ENCODE measurements at regions of chr1 and their contacts with region 1.

Region 1: DNA sequence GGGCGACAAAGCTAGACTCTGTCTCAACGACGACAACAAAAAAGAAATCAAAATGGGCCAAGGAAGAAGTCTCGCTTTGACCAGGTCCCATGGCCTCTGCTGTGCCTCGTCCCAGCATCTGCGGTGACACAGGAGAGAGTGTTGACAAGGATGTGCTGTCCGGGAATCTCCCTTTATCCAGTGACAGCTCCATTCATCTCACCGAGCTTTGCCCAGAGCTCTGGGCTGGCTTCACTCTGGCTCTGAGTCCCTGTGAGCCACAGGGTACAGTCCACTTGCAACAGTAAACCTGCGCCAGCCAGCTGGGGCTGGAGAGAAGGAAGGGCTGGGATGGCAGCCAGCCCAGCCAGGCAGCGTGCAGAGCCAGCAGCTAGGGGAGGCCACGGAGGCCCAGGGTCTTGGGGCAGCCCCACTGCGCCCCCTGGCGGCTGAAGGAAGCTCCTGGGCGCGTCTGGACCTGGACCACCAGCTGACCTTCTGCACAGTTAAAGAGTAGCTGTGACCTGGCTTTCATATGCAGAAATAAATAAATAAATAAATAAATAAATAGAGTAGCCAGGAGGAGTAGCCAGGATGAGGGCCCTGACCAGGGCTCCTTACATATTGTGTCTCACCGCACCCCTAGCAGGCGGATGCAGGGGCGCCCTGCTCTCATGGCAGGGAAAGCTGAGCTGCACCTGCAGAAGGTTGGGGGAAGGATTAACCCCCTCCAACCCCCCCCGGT is 29.7 kb downstream of the ENO1 start:
- DNase-seq: peak; percentile 97 to 98
- H3K4me3 ChIP-seq: no peak overlapping the region
- H3K27ac ChIP-seq: peak overlapping the region; percentile 52 to 59 (median 56)
- H3K4me1 ChIP-seq: peaks cover 22 to 30% of the 10 kb centered on the region in 2 donors
- H3K27me3 ChIP-seq: no peaks in the 10 kb centered on the region
- CTCF ChIP-seq: peak; percentile 80 to 97 (median 94)
- POLR2A ChIP-seq: peak in 1 of 2 donors; percentile 64

Region 2: DNA sequence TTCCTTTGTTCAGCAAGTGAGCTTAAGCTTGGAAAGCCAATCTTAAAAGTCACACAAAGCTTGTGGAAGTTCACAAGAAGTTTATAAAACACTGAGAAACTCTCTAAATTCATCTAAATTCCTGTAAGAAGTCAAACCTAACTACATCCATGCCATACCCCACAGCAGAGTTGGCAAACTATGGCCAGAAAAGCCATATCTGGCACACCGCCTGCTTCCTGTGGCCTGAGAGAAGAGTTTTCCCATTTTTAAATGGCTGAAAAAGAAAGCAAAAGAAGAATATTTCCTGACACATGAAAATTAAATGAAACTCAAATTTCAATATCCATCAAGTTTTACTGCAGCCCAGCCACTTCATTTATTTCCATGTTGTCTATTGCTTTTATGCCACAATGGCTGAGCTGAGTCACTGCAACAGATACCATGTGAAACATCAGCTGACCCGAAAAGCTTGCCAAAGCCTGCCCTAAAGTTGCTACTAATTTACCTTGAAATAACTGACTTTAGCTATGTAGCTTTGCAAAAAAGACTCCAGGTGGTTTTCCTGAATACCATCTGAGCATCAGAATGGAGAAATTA is 293.8 kb before region 1 on chr1:
- intact Hi-C with region 1: loop called (anchors 10 kb)
- DNase-seq: peak; percentile 48 to 67
- H3K4me3 ChIP-seq: no peak overlapping the region
- H3K27ac ChIP-seq: peak overlapping the region; percentile 21 to 72 (median 46)
- H3K4me1 ChIP-seq: peaks cover 26 to 30% of the 10 kb centered on the region in 2 donors
- H3K27me3 ChIP-seq: no peaks in the 10 kb centered on the region
- CTCF ChIP-seq: no peak
- POLR2A ChIP-seq: no peak

Region 3: GRCh38 chr1:8794569-8794968 is 54.3 kb before region 1 on chr1:
- intact Hi-C with region 1: no loop called
- DNase-seq: peak; percentile 27 to 34
- H3K4me3 ChIP-seq: no peak overlapping the region
- H3K27ac ChIP-seq: no peak overlapping the region
- H3K4me1 ChIP-seq: peaks cover 22% of the 10 kb centered on the region in 2 donors
- H3K27me3 ChIP-seq: no peaks in the 10 kb centered on the region
- CTCF ChIP-seq: peak in 1 of 6 experiments; percentile 11
- POLR2A ChIP-seq: no peak

Region 4: GRCh38 chr1:8807004-8807403 is 41.8 kb before region 1 on chr1:
- intact Hi-C with region 1: no loop called
- DNase-seq: no peak
- H3K4me3 ChIP-seq: no peak overlapping the region
- H3K27ac ChIP-seq: no peak overlapping the region
- H3K4me1 ChIP-seq: peaks cover 0 to 2% of the 10 kb centered on the region in 2 donors
- H3K27me3 ChIP-seq: no peaks in the 10 kb centered on the region
- CTCF ChIP-seq: no peak
- POLR2A ChIP-seq: no peak

Region 5: DNA sequence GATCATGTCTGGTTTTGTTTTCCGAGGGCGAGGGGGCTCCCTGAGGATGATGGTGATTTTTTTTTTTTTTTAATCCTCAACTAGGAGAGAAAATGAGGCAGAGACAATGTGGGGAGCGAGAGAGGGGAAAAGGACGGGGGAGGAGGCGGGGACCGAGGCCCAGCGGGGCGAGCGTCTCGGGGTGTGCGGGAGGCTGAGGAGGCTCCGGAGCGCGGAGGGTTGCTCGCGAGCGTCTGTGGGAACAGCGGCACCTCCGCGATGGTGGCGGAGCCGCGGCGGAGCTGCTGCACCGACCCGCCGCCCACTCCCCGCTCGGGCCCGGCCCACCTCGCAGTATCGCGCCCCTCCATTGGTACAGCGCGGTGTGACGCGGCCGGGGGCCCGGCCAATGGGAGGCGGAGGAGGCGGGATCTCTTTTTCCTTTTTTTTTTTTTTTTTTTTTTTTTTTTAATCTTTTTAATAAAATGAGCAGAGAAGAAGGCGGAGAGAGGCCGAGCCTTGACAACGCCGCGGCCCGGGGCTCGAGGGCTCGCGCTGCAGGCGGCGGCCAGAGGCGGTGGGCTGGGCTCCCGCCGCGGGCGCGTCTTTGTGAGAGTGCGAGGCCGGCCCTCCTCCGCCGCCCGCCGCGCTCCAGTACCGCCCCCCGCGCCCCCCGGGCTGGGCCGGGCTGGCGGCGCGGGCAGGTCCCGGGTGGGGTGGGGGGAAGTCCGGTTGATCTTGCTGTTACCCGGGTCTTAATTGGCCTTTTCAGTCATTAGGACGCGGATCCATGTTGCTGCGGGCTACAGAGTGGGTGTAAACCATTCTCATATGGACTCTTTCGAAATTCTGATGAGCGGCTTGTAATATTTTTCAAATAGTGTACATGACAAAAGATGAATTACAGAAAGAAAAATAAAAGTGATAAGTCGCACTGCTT is 31.2 kb before region 1 on chr1 and contains the start of gene RERE:
- intact Hi-C with region 1: no loop called
- DNase-seq: peak; percentile 93
- H3K4me3 ChIP-seq: peak within 1 kb of the TSS; percentile 9 to 92 (median 58)
- H3K27ac ChIP-seq: peak within 1 kb of the TSS; percentile 93 to 97 (median 94)
- H3K4me1 ChIP-seq: peaks cover 29 to 52% of the 10 kb centered on the region in 2 donors
- H3K27me3 ChIP-seq: no peaks in the 10 kb centered on the region
- CTCF ChIP-seq: no peak
- POLR2A ChIP-seq: peak; percentile 90 to 99
- total RNA-seq, gene RERE: 118 to 244 (median 131) TPM

Measured in thyroid gland (tissue), 4 donors.